A549 (cell line): ENCODE measurements at regions of chr10 and their contacts with region 1.

Region 1: DNA sequence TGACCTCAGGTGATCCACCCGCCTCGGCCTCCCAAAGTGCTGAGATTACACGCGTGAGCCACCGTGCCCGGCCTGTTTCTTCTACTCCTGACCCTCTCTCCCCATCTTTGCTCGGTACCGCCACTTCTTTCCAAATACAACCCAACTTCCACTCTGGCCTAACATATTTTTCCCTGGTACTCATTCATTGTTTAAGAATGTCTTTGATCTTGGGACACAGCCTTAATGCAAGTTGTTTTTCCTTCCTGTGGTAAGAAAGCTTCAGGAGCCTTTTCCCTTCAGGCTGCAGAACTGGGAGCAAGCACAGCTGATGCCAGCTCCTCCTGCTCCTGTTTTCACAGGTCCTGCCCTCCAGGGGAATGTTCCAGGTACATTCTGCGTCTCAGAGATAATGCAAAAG is 13.7 kb downstream of the CALML3 start:
- DNase-seq: no peak
- ATAC-seq: peak in 1 of 2 experiments; percentile 34; a peak in 1 of 6 replicates
- H3K4me3 ChIP-seq: no peak overlapping the region
- H3K27ac ChIP-seq: peak overlapping the region in 1 of 2 experiments; percentile 66; a peak in 3 of 6 replicates
- H3K4me1 ChIP-seq: peaks cover 9% of the 10 kb centered on the region
- CTCF ChIP-seq: no peak
- EP300 ChIP-seq: no peak
- POLR2A ChIP-seq: no peak
- RAD21 ChIP-seq: no peak

Region 2: GRCh38 chr10:5125315-5126044 is 413.0 kb before region 1 on chr10:
- CTCF ChIA-PET with region 1: no interaction called
- POLR2A ChIA-PET with region 1: interaction called, 12 read pairs
- DNase-seq: no peak
- ATAC-seq: no peak
- H3K4me3 ChIP-seq: no peak overlapping the region
- H3K27ac ChIP-seq: no peak overlapping the region
- H3K4me1 ChIP-seq: no peaks in the 10 kb centered on the region
- CTCF ChIP-seq: no peak
- EP300 ChIP-seq: no peak
- POLR2A ChIP-seq: no peak
- RAD21 ChIP-seq: no peak

Region 3: DNA sequence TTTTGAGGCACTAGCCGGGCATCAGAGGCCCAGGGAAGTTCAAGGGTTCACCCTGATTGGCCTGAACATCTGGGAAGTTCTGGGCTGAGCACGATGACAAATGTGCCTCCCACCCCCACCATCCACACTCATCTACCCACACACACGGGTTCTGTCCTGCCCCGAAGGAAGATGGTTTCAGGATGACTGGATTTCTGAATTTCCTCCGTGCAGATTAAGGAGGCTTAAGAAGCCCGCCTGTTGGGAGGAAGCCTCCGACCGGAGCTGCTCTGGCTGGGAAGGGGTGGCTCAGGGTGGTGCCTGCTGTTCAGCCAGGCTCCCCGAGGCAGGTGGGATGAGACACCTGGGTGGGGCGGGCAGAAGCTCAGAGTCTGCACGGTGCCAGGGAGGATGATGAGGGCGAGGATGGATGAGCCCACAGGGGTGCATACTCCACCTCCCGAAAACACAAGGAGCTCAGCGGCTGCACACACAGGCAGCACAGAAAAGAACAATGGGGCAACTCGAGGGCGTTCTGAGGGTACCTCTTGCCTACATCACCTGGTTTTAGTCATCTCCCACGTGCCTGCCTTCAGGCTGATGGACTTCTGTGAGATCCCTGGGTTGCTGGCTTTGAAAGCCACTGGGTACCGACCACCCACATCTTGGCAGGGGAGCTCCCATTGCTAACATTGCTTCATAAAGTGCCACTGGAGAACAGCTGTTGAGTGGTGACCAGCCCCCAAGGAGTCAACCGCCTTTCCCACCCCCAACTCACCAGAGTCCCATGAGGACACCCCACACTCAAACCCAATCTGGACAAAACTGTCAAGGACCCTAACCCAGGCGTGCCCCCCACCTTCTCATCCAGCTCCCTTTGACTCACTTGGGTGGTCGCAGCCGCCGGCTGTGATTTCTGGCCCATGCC is 27.5 kb after region 1 on chr10:
- CTCF ChIA-PET with region 1: no interaction called
- POLR2A ChIA-PET with region 1: no interaction called
- DNase-seq: no peak
- ATAC-seq: no peak
- H3K4me3 ChIP-seq: no peak overlapping the region
- H3K27ac ChIP-seq: no peak overlapping the region
- H3K4me1 ChIP-seq: no peaks in the 10 kb centered on the region
- CTCF ChIP-seq: no peak
- EP300 ChIP-seq: no peak
- POLR2A ChIP-seq: no peak
- RAD21 ChIP-seq: no peak